ENCODE measurements at regions of chr17 and their contacts with region 1.

Region 1: GRCh38 chr17:44363613-44364159 is at the start of gene FAM171A2:
- H3K4me3 ChIP-seq: peak within 1 kb of the TSS; percentile 66
- H3K27ac ChIP-seq: peak within 1 kb of the TSS; percentile 88; the same call in 1 of the 2 replicates
- H3K4me1 ChIP-seq: peaks cover 21% of the 10 kb centered on the region
- CTCF ChIP-seq: no peak

Region 2: DNA sequence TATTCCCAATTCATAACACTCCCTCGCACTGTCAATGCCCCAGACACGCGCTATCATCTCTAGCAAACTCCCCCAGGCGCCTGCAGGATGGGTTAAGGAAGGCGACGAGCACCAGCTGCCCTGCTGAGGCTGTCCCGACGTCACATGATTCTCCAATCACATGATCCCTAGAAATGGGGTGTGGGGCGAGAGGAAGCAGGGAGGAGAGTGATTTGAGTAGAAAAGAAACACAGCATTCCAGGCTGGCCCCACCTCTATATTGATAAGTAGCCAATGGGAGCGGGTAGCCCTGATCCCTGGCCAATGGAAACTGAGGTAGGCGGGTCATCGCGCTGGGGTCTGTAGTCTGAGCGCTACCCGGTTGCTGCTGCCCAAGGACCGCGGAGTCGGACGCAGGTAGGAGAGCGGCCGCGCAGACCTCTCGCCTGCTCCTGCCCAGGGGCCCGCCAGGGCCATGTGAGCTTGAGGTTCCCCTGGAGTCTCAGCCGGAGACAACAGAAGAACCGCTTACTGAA is 18.7 kb before region 1 on chr17 and contains the start of gene GRN:
- CTCF ChIA-PET with region 1: interaction called, 21 read pairs
- POLR2A ChIA-PET with region 1: interaction called, 23 read pairs
- H3K4me3 ChIP-seq: peak within 1 kb of the TSS; percentile 82
- H3K27ac ChIP-seq: peak within 1 kb of the TSS; percentile 40; the same call in 1 of the 2 replicates
- H3K4me1 ChIP-seq: no peaks in the 10 kb centered on the region
- CTCF ChIP-seq: no peak

Region 3: DNA sequence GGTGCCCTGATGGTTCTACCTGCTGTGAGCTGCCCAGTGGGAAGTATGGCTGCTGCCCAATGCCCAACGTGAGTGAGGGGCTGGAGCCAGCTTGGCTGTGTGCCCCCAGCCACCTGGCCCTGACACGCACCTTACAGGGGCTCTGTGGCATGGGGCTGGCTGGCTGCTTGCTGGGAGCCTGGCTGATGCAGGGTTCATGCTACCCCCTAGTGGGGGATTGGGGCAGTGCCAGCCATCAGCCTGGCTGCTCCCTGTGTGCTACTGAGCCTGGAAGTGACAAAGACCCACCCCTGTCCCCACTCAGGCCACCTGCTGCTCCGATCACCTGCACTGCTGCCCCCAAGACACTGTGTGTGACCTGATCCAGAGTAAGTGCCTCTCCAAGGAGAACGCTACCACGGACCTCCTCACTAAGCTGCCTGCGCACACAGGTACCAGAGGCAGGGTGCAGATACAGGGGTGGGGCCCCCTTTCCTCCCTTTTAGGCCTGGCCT is 12.9 kb before region 1 on chr17:
- CTCF ChIA-PET with region 1: interaction called, 21 read pairs
- POLR2A ChIA-PET with region 1: interaction called, 23 read pairs
- H3K4me3 ChIP-seq: no peak overlapping the region
- H3K27ac ChIP-seq: no peak overlapping the region
- H3K4me1 ChIP-seq: no peaks in the 10 kb centered on the region
- CTCF ChIP-seq: peak; percentile 86

Region 4: DNA sequence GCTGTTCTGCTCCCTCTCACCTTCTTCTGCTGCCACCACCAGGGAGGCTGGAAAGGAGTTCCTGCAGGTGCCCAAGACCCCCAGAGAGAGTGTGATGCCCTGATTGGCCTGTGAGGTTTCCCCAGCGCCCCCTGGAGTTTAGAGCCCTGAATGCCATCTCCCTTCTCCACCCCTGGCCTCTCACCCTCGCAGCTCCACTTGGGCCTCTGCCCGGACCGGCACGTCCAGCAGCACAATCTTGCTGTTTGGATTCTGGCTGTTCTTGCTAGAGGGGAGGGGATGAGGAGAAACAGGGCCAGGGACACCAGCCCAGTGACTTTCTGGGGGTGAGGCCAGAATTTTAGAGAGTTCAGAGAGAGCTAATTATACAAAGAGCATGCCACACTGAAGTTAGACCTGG is 12.4 kb after region 1 on chr17:
- CTCF ChIA-PET with region 1: interaction called, 19 read pairs
- POLR2A ChIA-PET with region 1: interaction called, 3 read pairs
- H3K4me3 ChIP-seq: no peak overlapping the region
- H3K27ac ChIP-seq: no peak overlapping the region
- H3K4me1 ChIP-seq: no peaks in the 10 kb centered on the region
- CTCF ChIP-seq: peak; percentile 15; the same call in 1 of the 2 replicates

Region 5: DNA sequence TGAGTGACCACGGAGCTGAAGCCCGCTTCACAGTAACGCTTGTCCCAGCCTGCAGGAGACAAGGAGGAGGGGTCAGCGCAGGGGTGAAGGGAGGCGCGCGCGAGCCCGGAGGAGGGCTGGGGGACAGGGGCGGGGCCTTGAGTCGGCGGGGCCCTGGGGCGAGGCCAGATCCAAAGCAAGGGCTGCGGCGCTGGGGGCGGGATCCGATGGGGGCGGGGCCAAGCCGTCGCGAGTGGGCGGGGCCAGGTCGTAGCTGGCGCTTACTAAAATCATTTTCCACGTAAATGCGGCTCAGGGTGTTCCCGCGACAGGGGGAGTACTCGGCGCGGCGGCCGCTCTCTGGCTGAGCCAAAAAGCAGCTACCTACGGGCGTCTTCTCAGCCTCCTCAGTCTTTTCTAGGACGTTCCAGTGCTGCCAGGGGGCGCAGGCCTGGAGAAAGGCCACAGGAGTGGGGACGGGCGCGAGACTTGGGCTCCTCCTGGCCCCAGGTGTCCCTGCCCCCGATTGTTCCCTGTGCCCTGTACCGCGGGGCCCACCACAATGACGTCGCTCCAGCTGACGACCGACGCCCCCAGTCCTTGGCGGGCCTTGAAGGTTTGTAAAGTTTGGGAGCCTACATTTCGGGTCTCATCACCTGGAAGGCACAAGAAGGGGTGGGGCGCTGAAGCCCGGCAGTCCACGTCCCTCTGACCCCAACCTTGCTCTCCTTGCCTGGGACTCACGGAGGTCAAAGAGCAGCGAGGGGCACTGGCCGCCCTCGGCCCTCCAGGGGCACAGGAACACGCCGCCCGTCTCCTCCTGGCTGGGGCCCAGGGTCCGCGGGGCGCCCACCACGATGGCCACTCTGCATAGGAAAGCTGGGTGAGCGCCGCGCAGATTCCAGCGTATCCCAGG is 21.8 kb after region 1 on chr17:
- CTCF ChIA-PET with region 1: interaction called, 4 read pairs
- POLR2A ChIA-PET with region 1: interaction called, 12 read pairs
- H3K4me3 ChIP-seq: peak overlapping the region; percentile 50
- H3K27ac ChIP-seq: peak overlapping the region; percentile 43; the same call in 1 of the 2 replicates
- H3K4me1 ChIP-seq: peaks cover 2% of the 10 kb centered on the region; the same call in 1 of the 2 replicates
- CTCF ChIP-seq: peak; percentile 77; the same call in 1 of the 2 replicates

Region 6: DNA sequence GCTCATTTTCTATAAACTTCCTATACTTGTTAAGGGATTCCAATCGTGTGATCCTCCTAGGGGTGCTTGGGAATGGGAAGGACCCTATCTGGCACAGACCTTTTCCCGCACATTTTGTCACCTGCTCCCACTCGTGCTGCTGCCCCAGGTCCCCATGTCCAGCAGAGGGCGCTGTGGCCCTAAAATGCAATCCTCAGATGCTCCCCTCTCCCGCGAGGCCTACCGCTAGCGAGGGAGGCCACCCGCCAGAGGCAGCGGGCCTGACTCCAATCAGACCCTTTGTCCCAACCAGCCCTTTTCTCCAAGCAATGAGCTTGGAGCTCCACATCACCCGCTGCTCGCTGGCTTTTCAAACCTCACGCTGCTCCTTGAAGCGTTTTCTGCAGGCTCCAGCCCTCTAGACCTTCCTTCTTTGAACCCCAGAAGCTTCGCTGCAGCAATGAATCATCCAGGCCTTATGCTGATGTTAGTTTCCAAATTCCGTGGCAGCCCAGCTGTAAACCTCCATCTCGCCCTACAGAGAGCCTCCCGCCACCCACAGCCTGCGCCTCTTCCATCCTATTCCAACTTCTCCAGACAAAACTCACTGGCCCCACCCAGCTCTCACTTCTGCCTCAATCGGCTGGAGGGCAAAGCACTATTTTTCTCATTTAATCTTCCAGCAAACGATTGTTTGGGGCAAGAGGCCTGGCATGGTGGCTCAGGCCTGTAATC is 170.0 kb after region 1 on chr17:
- CTCF ChIA-PET with region 1: no interaction called
- POLR2A ChIA-PET with region 1: no interaction called
- H3K4me3 ChIP-seq: no peak overlapping the region
- H3K27ac ChIP-seq: peak overlapping the region; percentile 58
- H3K4me1 ChIP-seq: no peaks in the 10 kb centered on the region; the same call in 1 of the 2 replicates
- CTCF ChIP-seq: peak; percentile 97

Measured in HEK293 (cell line).